ENCODE measurements at regions of chr5 and their contacts with region 1.

Region 1: GRCh38 chr5:173567574-173567973 is 48.9 kb downstream of the BOD1 start:
- DNase-seq: peak; percentile 97
- ATAC-seq: peak; percentile 84
- H3K4me3 ChIP-seq: 0 out of 2 replicates have a peak overlapping the region, but pooled peaks have one; percentile 9
- H3K27ac ChIP-seq: peak overlapping the region; percentile 80
- H3K4me1 ChIP-seq: peaks cover 25% of the 10 kb centered on the region
- H3K27me3 ChIP-seq: no peaks in the 10 kb centered on the region
- CTCF ChIP-seq: no peak

Region 2: DNA sequence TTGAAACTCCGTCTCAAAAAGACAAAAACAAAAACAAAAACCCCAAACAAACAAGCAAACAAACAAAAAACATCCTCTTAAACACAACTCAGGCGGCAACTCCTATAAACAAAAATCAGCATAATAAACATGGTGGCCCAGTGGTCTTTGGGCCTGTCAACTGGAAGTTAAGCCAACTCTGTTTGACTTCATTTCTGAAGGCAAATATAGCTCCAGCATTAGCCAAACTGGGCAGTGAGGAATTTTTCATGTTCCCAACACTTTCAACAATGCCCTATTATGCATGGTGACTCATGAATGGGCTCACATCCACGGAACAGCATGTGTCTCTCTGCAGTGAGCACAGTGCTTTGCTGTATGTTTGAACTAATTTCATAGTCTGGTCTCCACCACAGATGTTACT is 95.4 kb before region 1 on chr5:
- CTCF ChIA-PET with region 1: no interaction called
- POLR2A ChIA-PET with region 1: no interaction called
- intact Hi-C with region 1: loop called (anchors 5 kb)
- DNase-seq: peak; percentile 99
- ATAC-seq: peak; percentile 96
- H3K4me3 ChIP-seq: no peak overlapping the region
- H3K27ac ChIP-seq: peak overlapping the region; percentile 88
- H3K4me1 ChIP-seq: peaks cover 23% of the 10 kb centered on the region
- H3K27me3 ChIP-seq: no peaks in the 10 kb centered on the region
- CTCF ChIP-seq: no peak

Region 3: DNA sequence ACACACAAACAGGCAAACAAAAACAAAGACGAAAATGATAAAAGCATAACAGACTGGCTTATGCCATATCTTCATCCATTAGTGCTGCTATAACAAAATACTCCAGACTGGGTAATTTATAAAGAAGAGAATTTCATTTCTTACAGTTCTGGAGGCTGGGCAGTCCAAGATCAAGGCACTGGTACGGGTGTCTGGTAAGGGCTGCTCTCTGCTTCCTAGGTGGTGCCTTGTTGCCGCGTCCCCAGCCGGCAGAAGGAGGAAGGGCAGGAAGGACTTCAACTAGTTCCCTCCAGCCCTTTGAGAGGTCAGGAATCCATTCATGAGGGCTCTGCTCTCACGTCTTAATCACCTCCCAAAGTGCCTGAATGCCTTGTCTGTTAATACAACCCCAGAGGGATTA is 73.7 kb before region 1 on chr5:
- CTCF ChIA-PET with region 1: interaction called, 18 read pairs
- POLR2A ChIA-PET with region 1: no interaction called
- intact Hi-C with region 1: no loop called
- DNase-seq: no peak
- ATAC-seq: no peak
- H3K4me3 ChIP-seq: no peak overlapping the region
- H3K27ac ChIP-seq: no peak overlapping the region
- H3K4me1 ChIP-seq: no peaks in the 10 kb centered on the region
- H3K27me3 ChIP-seq: no peaks in the 10 kb centered on the region
- CTCF ChIP-seq: no peak